ENCODE measurements at regions of chr20 and their contacts with region 1.

Region 1: GRCh38 chr20:50929299-50930138 is 1.7 kb downstream of the ADNP start:
- DNase-seq: peak; percentile 90 to 96 (median 92)
- H3K4me3 ChIP-seq: peak overlapping the region; percentile 39 to 49
- H3K4me3 Mint-ChIP-seq: peak overlapping the region; percentile 86 to 96 (median 92)
- H3K27ac ChIP-seq: peak overlapping the region; percentile 48
- H3K27ac Mint-ChIP-seq: peak overlapping the region; percentile 92 to 100 (median 95)
- H3K4me1 ChIP-seq: peaks cover 64% of the 10 kb centered on the region
- H3K4me1 Mint-ChIP-seq: peaks cover 37 to 62% (median 50%) of the 10 kb centered on the region in 4 donors
- H3K27me3 ChIP-seq: no peaks in the 10 kb centered on the region
- H3K27me3 Mint-ChIP-seq: no peaks in the 10 kb centered on the region

Region 2: GRCh38 chr20:50625986-50626677 is 303.4 kb before region 1 on chr20:
- CTCF ChIA-PET with region 1: no interaction called
- POLR2A ChIA-PET with region 1: no interaction called
- intact Hi-C with region 1: no loop called
- DNase-seq: no peak
- H3K4me3 ChIP-seq: no peak overlapping the region
- H3K4me3 Mint-ChIP-seq: no peak overlapping the region
- H3K27ac ChIP-seq: no peak overlapping the region
- H3K27ac Mint-ChIP-seq: no peak overlapping the region
- H3K4me1 ChIP-seq: no peaks in the 10 kb centered on the region
- H3K4me1 Mint-ChIP-seq: no peaks in the 10 kb centered on the region
- H3K27me3 ChIP-seq: no peaks in the 10 kb centered on the region
- H3K27me3 Mint-ChIP-seq: no peaks in the 10 kb centered on the region

Region 3: GRCh38 chr20:50731055-50731871 is 198.3 kb before region 1 on chr20 and contains the start of gene PARD6B:
- CTCF ChIA-PET with region 1: no interaction called
- POLR2A ChIA-PET with region 1: interaction called, 6 read pairs
- intact Hi-C with region 1: loop called (anchors 1 kb)
- DNase-seq: peak; percentile 99 to 100 (median 100)
- H3K4me3 ChIP-seq: peak within 1 kb of the TSS; percentile 66 to 72
- H3K4me3 Mint-ChIP-seq: peak within 1 kb of the TSS; percentile 90 to 95 (median 92)
- H3K27ac ChIP-seq: peak within 1 kb of the TSS; percentile 55
- H3K27ac Mint-ChIP-seq: peak within 1 kb of the TSS; percentile 83 to 91 (median 87)
- H3K4me1 ChIP-seq: peaks cover 21% of the 10 kb centered on the region
- H3K4me1 Mint-ChIP-seq: peaks cover 16 to 37% (median 24%) of the 10 kb centered on the region in 4 donors
- H3K27me3 ChIP-seq: no peaks in the 10 kb centered on the region
- H3K27me3 Mint-ChIP-seq: no peaks in the 10 kb centered on the region
- total RNA-seq, gene PARD6B: 10.9 to 12.7 TPM

Region 4: DNA sequence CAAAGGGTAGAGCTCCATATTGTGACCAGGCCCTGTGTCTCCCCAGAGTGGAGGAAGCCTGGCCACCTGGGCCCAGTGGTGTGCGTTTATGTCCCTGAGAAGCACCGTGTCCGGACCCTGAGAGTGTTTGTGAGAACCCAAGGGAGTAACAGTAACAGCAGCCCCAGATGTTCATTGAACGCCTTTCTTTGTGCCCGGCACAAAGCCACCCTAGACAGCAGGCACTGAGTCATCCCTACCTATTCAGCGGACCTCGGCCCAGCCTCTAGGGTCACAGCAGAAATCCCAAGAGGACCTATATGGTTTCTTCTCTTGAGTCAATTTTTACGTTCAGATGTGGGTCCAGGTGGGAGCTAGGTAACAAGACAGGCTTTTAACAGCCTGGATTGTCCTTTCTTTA is 110.2 kb before region 1 on chr20:
- CTCF ChIA-PET with region 1: interaction called, 10 read pairs
- POLR2A ChIA-PET with region 1: interaction called, 8 read pairs
- intact Hi-C with region 1: loop called (anchors 1 kb)
- DNase-seq: no peak
- H3K4me3 ChIP-seq: no peak overlapping the region
- H3K4me3 Mint-ChIP-seq: no peak overlapping the region
- H3K27ac ChIP-seq: no peak overlapping the region
- H3K27ac Mint-ChIP-seq: peak overlapping the region in 2 of 7 donors; percentile 55 to 57
- H3K4me1 ChIP-seq: peaks cover 15% of the 10 kb centered on the region
- H3K4me1 Mint-ChIP-seq: peaks cover 14 to 32% (median 19%) of the 10 kb centered on the region in 4 donors
- H3K27me3 ChIP-seq: no peaks in the 10 kb centered on the region
- H3K27me3 Mint-ChIP-seq: no peaks in the 10 kb centered on the region

Region 5: DNA sequence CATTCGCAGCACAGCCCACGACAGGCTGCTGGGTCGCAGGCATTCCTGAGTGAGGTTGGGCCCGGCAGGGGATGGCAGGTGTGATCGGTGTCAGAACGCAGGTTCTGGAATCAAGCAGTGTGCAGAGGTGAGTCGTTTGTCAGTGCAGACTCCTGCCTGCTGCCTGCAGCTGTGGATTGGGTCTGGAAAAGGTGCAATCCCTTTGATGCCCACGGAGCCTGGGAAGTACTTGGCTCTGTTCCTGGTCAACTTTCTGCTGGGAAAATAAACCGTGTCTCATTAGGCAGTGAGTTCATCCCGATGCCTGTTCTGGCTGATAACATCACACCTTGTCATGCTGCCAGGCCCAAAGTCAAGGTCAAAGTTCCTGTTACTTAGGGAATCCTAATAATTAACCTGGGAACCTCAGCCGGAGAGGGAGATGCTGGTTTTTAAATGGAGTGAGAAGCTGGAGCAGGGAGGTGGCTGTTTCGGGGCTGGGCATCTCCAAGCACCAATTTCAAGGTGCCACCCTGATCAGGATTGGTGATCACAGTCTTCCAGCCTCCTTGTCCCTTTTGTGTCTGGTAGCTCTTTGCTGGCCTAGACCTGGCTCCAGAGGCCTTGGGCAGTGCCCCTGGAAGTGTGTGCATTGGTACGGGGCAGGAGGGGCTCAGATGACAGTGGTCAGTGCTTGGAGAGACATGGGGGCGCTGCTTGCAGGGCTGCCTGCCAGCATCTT is 73.3 kb before region 1 on chr20:
- CTCF ChIA-PET with region 1: no interaction called
- POLR2A ChIA-PET with region 1: no interaction called
- intact Hi-C with region 1: no loop called
- DNase-seq: no peak
- H3K4me3 ChIP-seq: no peak overlapping the region
- H3K4me3 Mint-ChIP-seq: no peak overlapping the region
- H3K27ac ChIP-seq: no peak overlapping the region
- H3K27ac Mint-ChIP-seq: no peak overlapping the region
- H3K4me1 ChIP-seq: no peaks in the 10 kb centered on the region
- H3K4me1 Mint-ChIP-seq: peaks cover 0 to 2% (median under 1%) of the 10 kb centered on the region in 4 donors
- H3K27me3 ChIP-seq: no peaks in the 10 kb centered on the region
- H3K27me3 Mint-ChIP-seq: no peaks in the 10 kb centered on the region

Region 6: GRCh38 chr20:50913690-50914375 is 15.7 kb before region 1 on chr20:
- CTCF ChIA-PET with region 1: interaction called, 27 read pairs
- POLR2A ChIA-PET with region 1: interaction called, 33 read pairs
- intact Hi-C with region 1: loop called (anchors 1 kb)
- DNase-seq: no peak
- H3K4me3 ChIP-seq: no peak overlapping the region
- H3K4me3 Mint-ChIP-seq: peak overlapping the region in 1 of 8 donors; percentile 23
- H3K27ac ChIP-seq: no peak overlapping the region
- H3K27ac Mint-ChIP-seq: peak overlapping the region in 5 of 7 donors; percentile 32 to 76 (median 55)
- H3K4me1 ChIP-seq: peaks cover 88% of the 10 kb centered on the region
- H3K4me1 Mint-ChIP-seq: peaks cover 67 to 94% (median 80%) of the 10 kb centered on the region in 4 donors
- H3K27me3 ChIP-seq: no peaks in the 10 kb centered on the region
- H3K27me3 Mint-ChIP-seq: no peaks in the 10 kb centered on the region

Region 7: GRCh38 chr20:50943069-50943468 is 13.6 kb after region 1 on chr20:
- CTCF ChIA-PET with region 1: interaction called, 30 read pairs
- POLR2A ChIA-PET with region 1: interaction called, 9 read pairs
- intact Hi-C with region 1: no loop called
- DNase-seq: peak in 3 of 5 donors; percentile 3 to 30 (median 11)
- H3K4me3 ChIP-seq: no peak overlapping the region
- H3K4me3 Mint-ChIP-seq: no peak overlapping the region
- H3K27ac ChIP-seq: no peak overlapping the region
- H3K27ac Mint-ChIP-seq: peak overlapping the region in 2 of 7 donors; percentile 22 to 68
- H3K4me1 ChIP-seq: no peaks in the 10 kb centered on the region
- H3K4me1 Mint-ChIP-seq: peaks cover 0 to 3% (median 1%) of the 10 kb centered on the region in 4 donors
- H3K27me3 ChIP-seq: no peaks in the 10 kb centered on the region
- H3K27me3 Mint-ChIP-seq: no peaks in the 10 kb centered on the region

Region 8: DNA sequence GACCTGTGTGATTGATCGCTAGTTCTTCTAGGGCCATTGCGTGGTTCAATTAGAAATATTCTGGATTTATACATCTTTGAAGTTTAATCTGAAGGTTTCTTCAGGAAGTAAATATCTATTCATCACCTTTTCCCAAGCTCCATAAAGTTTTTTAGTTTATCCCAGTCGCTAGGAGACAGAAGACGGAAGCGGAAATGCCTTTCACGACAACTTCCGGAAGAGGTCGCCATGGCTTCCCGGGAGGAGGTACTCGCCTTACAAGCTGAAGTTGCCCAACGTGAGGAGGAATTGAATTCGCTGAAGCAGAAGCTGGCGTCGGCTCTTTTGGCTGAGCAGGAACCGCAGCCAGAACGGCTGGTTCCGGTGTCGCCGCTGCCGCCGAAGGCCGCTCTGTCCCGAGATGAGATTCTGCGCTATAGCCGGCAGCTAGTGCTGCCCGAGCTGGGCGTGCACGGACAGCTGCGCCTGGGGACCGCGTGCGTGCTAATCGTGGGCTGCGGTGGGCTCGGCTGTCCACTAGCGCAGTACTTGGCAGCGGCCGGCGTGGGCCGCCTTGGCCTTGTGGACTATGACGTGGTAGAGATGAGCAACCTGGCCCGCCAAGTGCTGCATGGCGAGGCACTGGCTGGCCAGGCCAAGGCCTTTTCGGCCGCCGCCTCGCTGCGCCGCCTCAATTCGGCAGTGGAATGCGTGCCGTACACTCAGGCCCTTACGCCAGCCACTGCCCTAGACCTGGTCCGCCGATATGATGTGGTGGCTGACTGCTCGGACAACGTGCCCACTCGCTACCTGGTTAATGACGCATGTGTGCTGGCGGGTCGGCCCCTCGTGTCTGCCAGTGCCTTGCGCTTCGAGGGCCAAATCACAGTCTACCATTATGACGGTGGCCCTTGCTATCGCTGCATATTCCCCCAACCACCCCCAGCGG is 29.4 kb after region 1 on chr20 and contains the start of gene MOCS3:
- CTCF ChIA-PET with region 1: interaction called, 29 read pairs
- POLR2A ChIA-PET with region 1: interaction called, 153 read pairs
- intact Hi-C with region 1: loop called (anchors 1 kb)
- DNase-seq: peak; percentile 93
- H3K4me3 ChIP-seq: peak within 1 kb of the TSS; percentile 86 to 90
- H3K4me3 Mint-ChIP-seq: peak within 1 kb of the TSS; percentile 91 to 98 (median 96)
- H3K27ac ChIP-seq: peak within 1 kb of the TSS; percentile 91
- H3K27ac Mint-ChIP-seq: peak within 1 kb of the TSS; percentile 96 to 100 (median 100)
- H3K4me1 ChIP-seq: peaks cover 40% of the 10 kb centered on the region
- H3K4me1 Mint-ChIP-seq: peaks cover 23 to 68% (median 52%) of the 10 kb centered on the region in 4 donors
- H3K27me3 ChIP-seq: no peaks in the 10 kb centered on the region
- H3K27me3 Mint-ChIP-seq: no peaks in the 10 kb centered on the region
- total RNA-seq, gene MOCS3: 8.8 to 8.9 TPM

Measured in CD4-positive, alpha-beta memory T cell (primary cell).